ENCODE measurements at regions of chr10 and their contacts with region 1.

Region 1: GRCh38 chr10:44650691-44651661 is 260.2 kb upstream of the TMEM72 start:
- DNase-seq: no peak
- H3K4me3 ChIP-seq: no peak overlapping the region
- CTCF ChIP-seq: no peak
- POLR2A ChIP-seq: no peak

Region 2: DNA sequence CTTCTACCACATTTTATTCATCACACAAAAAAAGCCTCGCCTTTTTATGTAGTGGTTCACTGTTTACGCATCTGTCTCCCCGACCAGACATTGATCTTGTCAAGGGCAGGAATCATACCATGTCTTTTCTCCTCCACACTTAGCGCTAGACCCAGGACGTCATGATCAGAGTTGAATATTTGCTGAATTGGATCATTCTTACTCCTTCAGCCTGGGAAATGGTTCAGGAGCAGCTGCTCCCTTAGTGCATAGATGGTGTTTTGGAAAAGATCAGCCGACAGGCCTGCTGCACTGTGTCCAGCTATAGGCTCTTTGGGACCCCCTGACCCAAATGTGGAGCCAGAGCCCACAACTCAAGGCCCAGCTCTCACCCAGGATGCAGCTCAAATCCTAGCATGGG is 11.1 kb after region 1 on chr10:
- intact Hi-C with region 1: loop called (anchors 1 kb)
- DNase-seq: no peak
- H3K4me3 ChIP-seq: no peak overlapping the region
- CTCF ChIP-seq: no peak
- POLR2A ChIP-seq: no peak

Region 3: DNA sequence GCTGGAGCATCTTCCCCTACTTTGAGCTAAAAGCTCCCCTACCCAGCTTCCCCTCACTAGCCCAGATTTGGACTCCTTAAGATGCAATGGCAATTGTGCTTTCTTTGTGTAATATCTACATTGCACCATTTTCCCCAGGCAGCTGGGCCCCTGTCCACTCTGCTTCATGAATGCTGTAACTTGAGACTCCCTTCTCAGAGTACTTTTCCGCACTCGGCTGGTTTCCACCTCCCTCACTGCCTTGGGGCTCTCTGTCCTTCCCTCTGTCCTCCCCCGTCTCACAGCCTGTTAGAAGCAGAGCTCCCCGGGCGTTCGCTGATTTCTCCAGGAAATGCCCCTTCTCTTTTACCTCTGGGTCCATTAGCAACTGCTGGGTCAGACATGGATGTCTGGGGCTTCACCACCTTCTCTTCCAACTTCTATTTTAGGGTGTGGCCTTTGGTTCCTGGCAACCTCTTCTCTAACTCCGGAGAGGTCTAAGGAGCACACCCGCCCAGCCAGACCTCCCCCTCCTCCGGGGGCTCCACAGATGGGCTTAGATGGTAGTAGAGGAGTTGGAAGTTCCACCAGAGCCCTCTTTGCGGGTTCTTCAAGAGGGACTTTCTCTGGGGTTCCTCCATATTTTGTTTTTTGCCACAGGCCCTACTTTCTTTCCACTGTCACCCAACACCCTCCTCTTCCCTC is 257.2 kb after region 1 on chr10:
- intact Hi-C with region 1: no loop called
- DNase-seq: no peak
- H3K4me3 ChIP-seq: no peak overlapping the region
- CTCF ChIP-seq: no peak
- POLR2A ChIP-seq: no peak